Mammary epithelial cell (primary cell): ENCODE measurements at regions of chr4 and their contacts with region 1.

Region 1: DNA sequence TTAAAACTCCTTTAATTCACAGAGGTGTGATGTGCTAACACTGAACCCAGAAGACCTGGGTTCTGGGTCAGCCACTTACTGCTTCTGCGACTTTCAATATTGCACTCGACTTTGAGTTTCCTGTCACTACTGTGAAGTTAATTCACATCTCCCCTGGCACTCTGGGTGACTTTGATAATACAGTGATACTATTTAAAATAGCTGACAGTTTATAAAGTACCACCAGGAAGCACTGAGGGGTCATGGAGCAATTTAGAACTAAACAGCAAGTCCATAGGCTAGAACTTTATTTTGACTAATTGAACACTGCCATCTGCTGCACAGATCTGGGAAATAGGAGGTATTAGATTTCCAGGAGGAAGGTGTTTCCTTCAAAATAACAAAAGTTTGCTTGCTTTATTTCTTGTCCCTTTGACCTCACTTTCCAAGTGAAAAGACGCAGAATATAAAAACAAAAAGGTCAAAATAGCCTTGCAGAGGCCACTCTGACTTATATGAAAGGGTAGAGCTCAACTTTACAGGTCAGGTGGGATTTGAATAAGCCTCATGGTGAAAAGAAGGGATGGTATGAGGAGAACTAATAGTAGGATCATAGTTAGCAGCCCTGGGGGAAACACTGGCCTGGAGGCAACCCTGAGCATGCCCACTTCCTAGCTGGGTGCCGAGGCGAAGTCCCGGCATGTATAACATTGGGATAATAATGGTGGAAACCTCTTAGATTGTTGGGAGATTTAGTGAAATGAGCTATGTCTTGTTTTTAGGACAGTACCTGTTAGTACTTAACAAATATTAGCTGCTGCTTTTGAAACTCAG is 53.4 kb downstream of the ZNF518B start:
- DNase-seq: peak; percentile 45
- H3K4me3 ChIP-seq: no peak overlapping the region
- H3K27ac ChIP-seq: no peak overlapping the region
- H3K4me1 ChIP-seq: peaks cover 7% of the 10 kb centered on the region
- H3K27me3 ChIP-seq: no peaks in the 10 kb centered on the region
- CTCF ChIP-seq: peak; percentile 52 to 60

Region 2: DNA sequence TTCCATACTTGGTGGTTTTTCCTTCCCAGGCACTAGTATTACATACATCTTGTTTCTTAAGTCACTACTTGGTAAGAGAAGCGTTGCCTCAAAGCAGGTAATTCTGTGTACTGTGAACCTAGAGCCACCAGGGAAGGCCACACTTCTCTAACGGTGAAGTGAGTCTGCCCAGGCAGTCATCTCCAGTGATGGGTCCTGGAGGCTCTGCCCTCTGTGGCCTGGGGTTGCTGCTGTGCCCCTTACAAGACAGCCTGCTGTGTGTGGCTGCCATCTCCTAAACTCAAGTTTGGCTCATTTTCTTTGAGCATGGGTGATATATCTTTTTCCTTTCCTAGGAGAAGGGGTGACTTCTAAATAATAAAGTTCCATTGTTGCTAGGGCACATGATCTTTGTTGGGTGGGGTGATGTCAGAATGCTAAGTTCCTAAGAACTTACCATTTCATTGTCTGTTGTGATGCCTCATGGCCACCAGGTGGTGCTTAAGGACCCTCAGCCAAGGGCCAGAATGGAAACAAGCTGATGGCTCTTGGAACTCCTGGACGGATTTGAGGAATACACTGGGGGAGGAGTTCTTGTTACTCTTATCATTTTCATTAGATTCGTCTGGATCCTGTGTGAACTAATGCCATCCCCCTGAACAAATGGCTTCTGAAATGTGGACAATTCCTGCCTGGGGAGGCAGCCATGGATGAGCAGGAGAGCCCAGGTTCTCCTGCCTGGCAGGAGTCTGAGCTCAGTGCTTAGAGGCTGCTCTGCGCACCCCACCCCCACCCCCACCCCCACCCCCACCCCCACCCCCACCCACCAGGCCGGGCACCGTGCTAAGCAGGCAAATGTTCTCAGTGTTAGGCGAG is 246.1 kb before region 1 on chr4:
- CTCF ChIA-PET with region 1: interaction called, 5 read pairs
- dilution Hi-C with region 1: no loop called
- in situ Hi-C with region 1: loop called in 1 of 2 experiments (anchors 10 kb)
- intact Hi-C with region 1: loop called (anchors 1 kb)
- DNase-seq: peak; percentile 71
- H3K4me3 ChIP-seq: no peak overlapping the region
- H3K27ac ChIP-seq: no peak overlapping the region
- H3K4me1 ChIP-seq: peaks cover 14% of the 10 kb centered on the region
- H3K27me3 ChIP-seq: no peaks in the 10 kb centered on the region
- CTCF ChIP-seq: peak; percentile 85 to 91

Region 3: DNA sequence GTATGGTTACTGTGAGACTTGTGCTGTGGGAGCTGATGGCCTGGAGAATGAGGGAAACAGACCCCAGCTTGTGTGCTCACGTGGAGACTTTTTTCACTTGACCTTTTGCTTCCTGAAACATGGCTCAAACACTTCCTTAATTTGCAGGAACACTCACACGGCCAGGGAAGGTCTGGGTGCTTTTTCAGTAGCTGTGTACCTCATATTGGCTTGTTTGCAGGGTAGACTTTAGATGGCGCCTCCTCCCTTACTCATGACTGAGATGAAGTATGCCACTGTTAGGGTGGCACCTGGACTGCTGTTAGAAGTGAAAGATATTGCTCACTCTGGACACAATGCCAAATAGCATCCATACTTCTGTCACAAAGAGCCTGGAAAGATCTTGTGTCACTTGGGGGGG is 211.5 kb before region 1 on chr4:
- CTCF ChIA-PET with region 1: no interaction called
- dilution Hi-C with region 1: no loop called
- in situ Hi-C with region 1: loop called in 1 of 2 experiments (anchors 5 kb)
- intact Hi-C with region 1: loop called (anchors 1 kb)
- DNase-seq: peak; percentile 46
- H3K4me3 ChIP-seq: no peak overlapping the region
- H3K27ac ChIP-seq: no peak overlapping the region
- H3K4me1 ChIP-seq: no peaks in the 10 kb centered on the region
- H3K27me3 ChIP-seq: no peaks in the 10 kb centered on the region
- CTCF ChIP-seq: peak; percentile 35 to 66

Region 4: DNA sequence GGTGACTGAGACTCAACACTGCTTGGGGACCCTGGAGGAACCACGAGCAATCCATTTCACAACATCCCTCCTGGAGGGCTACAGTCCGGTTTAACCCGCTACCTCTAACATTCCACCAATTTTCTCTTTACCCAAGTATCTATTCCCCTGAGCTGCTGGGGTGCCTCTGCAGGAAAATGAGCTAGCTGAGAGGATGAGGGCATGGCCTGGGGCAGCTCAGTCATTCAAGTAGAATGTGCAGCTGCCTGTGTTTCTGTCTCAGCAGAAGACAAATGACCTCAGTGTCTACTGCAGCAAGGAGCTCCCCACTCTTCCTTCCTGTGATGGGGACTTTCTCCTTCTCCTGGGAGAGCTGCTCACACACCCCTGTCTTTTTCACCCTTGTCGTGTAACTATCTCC is 67.4 kb before region 1 on chr4:
- CTCF ChIA-PET with region 1: no interaction called
- dilution Hi-C with region 1: no loop called
- in situ Hi-C with region 1: no loop called
- intact Hi-C with region 1: no loop called
- DNase-seq: peak; percentile 89
- H3K4me3 ChIP-seq: no peak overlapping the region
- H3K27ac ChIP-seq: peak overlapping the region; percentile 31
- H3K4me1 ChIP-seq: peaks cover 42% of the 10 kb centered on the region
- H3K27me3 ChIP-seq: no peaks in the 10 kb centered on the region
- CTCF ChIP-seq: no peak

Region 5: DNA sequence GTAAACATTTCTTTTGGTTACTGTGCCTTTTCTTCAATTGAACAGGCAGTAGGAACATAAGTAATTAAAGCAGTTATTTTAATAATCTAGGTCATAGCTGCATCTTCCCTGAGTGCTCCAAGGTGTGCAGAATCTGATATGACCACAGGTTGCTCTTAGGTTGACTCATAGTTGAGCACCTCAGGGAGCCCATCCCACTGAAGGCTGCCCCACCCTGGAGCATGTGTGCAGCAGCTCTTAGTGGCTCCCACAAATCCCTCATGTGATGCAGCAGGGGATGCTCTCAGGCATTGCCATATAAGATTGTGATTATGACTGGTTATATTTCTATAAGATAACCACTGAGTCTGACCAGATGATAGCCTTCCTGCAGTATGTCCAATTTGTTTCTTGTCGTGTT is 18.9 kb before region 1 on chr4:
- CTCF ChIA-PET with region 1: no interaction called
- dilution Hi-C with region 1: no loop called
- in situ Hi-C with region 1: no loop called
- intact Hi-C with region 1: loop called (anchors 1 kb)
- DNase-seq: peak; percentile 64
- H3K4me3 ChIP-seq: no peak overlapping the region
- H3K27ac ChIP-seq: no peak overlapping the region
- H3K4me1 ChIP-seq: peaks cover 31% of the 10 kb centered on the region
- H3K27me3 ChIP-seq: no peaks in the 10 kb centered on the region
- CTCF ChIP-seq: no peak

Region 6: GRCh38 chr4:10535912-10536311 is 132.1 kb after region 1 on chr4:
- CTCF ChIA-PET with region 1: no interaction called
- dilution Hi-C with region 1: no loop called
- in situ Hi-C with region 1: loop called in 1 of 2 experiments (anchors 10 kb)
- intact Hi-C with region 1: loop called (anchors 1 kb)
- DNase-seq: no peak
- H3K4me3 ChIP-seq: no peak overlapping the region
- H3K27ac ChIP-seq: no peak overlapping the region
- H3K4me1 ChIP-seq: no peaks in the 10 kb centered on the region
- H3K27me3 ChIP-seq: no peaks in the 10 kb centered on the region
- CTCF ChIP-seq: no peak